ENCODE measurements at regions of chr18 and their contacts with region 1.

Region 1: DNA sequence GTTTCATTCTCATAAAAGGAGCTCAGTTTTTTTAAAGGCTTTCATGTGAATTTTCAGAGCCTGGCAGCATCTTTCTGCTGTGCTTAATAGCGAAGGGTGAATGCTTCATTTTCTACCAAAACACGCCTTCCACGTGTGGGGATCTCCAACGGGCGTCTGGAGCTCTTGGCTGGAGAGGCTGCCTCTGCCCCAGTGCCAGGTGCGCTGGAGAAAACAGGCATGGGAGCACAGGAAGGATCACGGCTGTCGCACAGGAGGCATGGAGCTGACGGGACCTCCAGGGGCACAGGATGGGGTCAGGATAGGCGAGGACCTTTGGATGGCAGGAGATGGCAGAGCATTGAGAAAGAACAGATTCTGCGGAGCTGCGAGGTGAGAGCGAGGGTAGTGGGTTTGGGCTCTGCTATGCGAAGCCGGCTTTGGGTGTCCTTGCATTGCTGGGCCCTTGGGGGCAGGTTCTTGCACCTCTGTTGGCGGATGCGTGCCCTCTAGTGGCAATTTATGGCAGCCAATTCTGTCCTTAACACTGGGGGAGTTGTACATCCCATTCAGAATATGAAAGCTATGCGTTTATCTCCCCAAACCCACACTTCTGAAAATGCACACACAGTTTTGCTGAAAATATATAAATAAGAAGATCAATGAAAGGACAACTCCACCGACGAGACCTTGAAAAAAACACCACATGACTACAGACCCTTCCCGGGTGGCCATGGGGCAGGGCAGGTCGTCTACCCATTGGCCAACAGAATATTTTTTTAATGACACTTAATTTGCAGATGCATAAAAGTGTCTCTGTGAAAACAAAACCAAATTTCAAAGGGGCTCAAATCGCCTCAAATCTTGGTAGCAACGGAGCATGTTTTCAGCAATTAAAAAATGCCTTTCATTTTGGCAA is 90.4 kb upstream of the SLC35G4 start:
- H3K4me3 ChIP-seq: no peak overlapping the region
- H3K27ac ChIP-seq: no peak overlapping the region
- H3K4me1 ChIP-seq: no peaks in the 10 kb centered on the region
- CTCF ChIP-seq: peak; percentile 82

Region 2: DNA sequence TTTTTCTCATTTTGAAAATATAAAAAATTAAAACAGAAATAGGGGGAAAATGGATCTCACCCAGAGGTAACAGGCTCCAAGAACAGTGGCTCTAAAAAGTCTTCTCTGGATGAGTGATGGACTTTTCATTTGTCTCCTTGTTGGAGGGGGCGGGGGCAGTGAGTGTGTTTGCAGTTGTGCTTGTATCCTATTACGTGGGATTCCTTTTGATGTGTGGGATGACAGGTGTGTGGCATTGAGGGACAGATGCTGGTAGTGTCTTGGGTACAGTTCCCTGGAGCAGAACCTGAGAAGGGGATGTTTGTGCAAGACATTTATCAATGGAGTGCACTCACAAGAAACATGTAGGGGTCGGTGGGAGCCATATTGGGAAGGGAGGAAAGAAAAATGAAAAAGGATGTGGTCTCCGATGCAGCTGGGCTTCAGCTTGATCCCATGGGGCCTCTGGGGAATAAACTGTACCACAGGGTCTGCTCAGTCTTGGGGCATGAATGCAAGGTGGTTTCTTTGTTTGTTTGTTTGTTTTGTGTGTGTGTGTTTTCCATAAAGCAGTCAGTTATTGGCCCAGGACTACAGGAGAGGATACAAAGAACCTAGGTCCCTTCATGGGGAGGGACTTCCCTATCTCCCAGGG is 29.7 kb before region 1 on chr18:
- CTCF ChIA-PET with region 1: interaction called, 10 read pairs
- POLR2A ChIA-PET with region 1: no interaction called
- H3K4me3 ChIP-seq: no peak overlapping the region
- H3K27ac ChIP-seq: no peak overlapping the region
- H3K4me1 ChIP-seq: no peaks in the 10 kb centered on the region
- CTCF ChIP-seq: no peak

Region 3: GRCh38 chr18:11529081-11529480 is 10.0 kb after region 1 on chr18:
- CTCF ChIA-PET with region 1: interaction called, 15 read pairs
- POLR2A ChIA-PET with region 1: no interaction called
- H3K4me3 ChIP-seq: no peak overlapping the region
- H3K27ac ChIP-seq: no peak overlapping the region
- H3K4me1 ChIP-seq: no peaks in the 10 kb centered on the region
- CTCF ChIP-seq: no peak